Activated CD4-positive, alpha-beta memory T cell treated with anti-CD3 and anti-CD28 coated beads, Interleukin-2, amount 10 ng/mL, durations not matched to agents 7 days and 5 days (primary cell): ENCODE measurements at regions of chr15 and their contacts with region 1.

Region 1: GRCh38 chr15:60496853-60497252 is 17.9 kb upstream of the ICE2 start:
- DNase-seq: no peak
- H3K4me3 Mint-ChIP-seq: no peak overlapping the region
- H3K27ac Mint-ChIP-seq: no peak overlapping the region
- H3K4me1 Mint-ChIP-seq: peaks cover 10% of the 10 kb centered on the region
- H3K27me3 Mint-ChIP-seq: no peaks in the 10 kb centered on the region

Region 2: GRCh38 chr15:60405405-60405804 is 91.4 kb before region 1 on chr15:
- CTCF ChIA-PET with region 1: no interaction called
- POLR2A ChIA-PET with region 1: no interaction called
- DNase-seq: no peak
- H3K4me3 Mint-ChIP-seq: no peak overlapping the region
- H3K27ac Mint-ChIP-seq: no peak overlapping the region
- H3K4me1 Mint-ChIP-seq: peaks cover 33% of the 10 kb centered on the region
- H3K27me3 Mint-ChIP-seq: peaks cover 3% of the 10 kb centered on the region

Region 3: DNA sequence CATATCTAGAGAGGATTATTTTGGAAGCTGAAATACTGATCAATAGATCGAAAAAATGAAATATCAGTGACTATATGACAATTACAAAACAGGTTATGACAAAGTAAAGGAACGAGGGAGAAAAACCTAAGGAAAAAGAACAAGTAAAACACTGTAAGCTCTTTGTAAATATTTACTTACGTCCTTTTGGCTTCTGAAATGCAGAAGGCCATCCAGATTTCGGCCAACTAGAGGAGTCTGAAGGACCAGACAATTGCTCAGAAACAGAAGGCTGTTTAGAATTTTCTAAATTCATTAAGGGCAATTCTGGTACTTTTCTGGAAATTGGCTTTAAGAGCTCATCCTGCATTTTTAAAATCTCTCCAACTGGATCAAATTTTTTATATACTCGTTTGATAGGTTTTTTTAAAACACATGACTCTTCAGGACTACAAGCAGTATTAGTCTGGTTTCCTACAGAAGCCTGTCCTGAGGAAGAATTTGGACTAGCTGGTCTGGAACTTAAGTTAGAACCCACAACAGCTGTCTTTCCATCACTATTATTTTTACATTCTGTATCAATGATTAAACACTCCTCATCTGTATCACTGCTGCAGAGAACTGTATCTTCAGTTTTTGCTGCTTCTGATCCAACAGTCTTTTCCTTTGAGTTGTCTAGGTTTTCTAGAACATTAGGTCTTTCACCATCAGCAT is 48.0 kb before region 1 on chr15:
- CTCF ChIA-PET with region 1: no interaction called
- POLR2A ChIA-PET with region 1: no interaction called
- DNase-seq: no peak
- H3K4me3 Mint-ChIP-seq: no peak overlapping the region
- H3K27ac Mint-ChIP-seq: no peak overlapping the region
- H3K4me1 Mint-ChIP-seq: no peaks in the 10 kb centered on the region
- H3K27me3 Mint-ChIP-seq: no peaks in the 10 kb centered on the region

Region 4: DNA sequence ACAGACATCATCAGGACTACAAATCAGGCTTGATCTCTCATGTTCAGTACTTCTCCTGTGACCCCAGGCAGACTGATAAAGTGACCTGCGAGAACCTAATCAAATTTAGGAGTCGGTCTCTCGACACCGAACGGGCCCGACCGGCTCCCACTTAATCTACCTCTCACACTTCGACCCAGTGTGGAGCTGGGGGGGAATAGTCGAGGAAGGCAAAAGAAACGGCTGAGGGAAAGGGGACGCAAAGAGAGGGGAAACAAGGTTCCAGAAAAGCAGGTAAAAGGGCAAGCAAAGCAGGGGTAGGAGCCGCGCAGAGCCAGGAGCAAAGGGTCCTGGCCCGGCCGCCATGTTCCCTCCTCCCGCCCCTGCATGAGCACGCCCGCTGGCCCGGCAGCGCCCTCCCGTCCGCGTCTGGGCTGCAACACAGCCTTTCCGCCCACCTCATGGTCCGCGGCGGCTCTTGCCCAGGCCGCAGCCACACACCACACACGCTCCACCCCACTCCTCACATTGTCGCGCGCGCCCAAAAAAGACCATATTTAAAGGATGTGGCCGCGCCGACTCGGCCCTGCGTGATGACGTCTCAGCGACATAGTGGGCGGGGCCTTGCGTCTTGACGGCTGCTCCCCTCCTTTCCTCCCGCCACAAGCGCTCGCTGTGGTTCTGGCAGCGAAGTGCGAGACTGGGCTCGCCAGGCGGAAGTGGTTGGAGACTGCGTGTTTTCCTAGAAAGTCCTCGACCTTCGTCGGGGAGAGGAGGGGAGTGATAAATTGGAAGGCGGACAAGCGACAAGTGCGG is 18.1 kb before region 1 on chr15 and contains the start of gene ICE2:
- CTCF ChIA-PET with region 1: interaction called, 3 read pairs
- POLR2A ChIA-PET with region 1: interaction called, 10 read pairs
- DNase-seq: peak; percentile 98
- H3K4me3 Mint-ChIP-seq: peak within 1 kb of the TSS; percentile 98
- H3K27ac Mint-ChIP-seq: peak within 1 kb of the TSS; percentile 97
- H3K4me1 Mint-ChIP-seq: peaks cover 59% of the 10 kb centered on the region
- H3K27me3 Mint-ChIP-seq: no peaks in the 10 kb centered on the region
- total RNA-seq, gene ICE2: 56.9 to 60.4 TPM